Panc1 (cell line): ENCODE measurements at regions of chr6 and their contacts with region 1.

Region 1: GRCh38 chr6:89940225-89941027 is 46.2 kb downstream of the GJA10 start:
- DNase-seq: peak; percentile 67
- ATAC-seq: peak; percentile 95
- H3K4me3 ChIP-seq: no peak overlapping the region
- H3K27ac ChIP-seq: peak overlapping the region; percentile 73
- H3K4me1 ChIP-seq: peaks cover 2% of the 10 kb centered on the region; the same call in 1 of the 2 replicates
- H3K27me3 ChIP-seq: no peaks in the 10 kb centered on the region
- CTCF ChIP-seq: peak; percentile 80

Region 2: GRCh38 chr6:89952686-89953085 is 12.3 kb after region 1 on chr6:
- CTCF ChIA-PET with region 1: interaction called, 12 read pairs
- POLR2A ChIA-PET with region 1: no interaction called
- in situ Hi-C with region 1: no loop called
- intact Hi-C with region 1: no loop called
- DNase-seq: no peak
- ATAC-seq: peak; percentile 80
- H3K4me3 ChIP-seq: no peak overlapping the region
- H3K27ac ChIP-seq: peak overlapping the region; percentile 70
- H3K4me1 ChIP-seq: peaks cover 21% of the 10 kb centered on the region
- H3K27me3 ChIP-seq: no peaks in the 10 kb centered on the region
- CTCF ChIP-seq: no peak

Region 3: GRCh38 chr6:90219209-90219985 is 279.0 kb after region 1 on chr6:
- CTCF ChIA-PET with region 1: interaction called, 11 read pairs
- POLR2A ChIA-PET with region 1: no interaction called
- in situ Hi-C with region 1: no loop called
- intact Hi-C with region 1: no loop called
- DNase-seq: no peak
- ATAC-seq: peak; percentile 61
- H3K4me3 ChIP-seq: peak overlapping the region; percentile 1 to 34; a peak in 3 of 4 replicates
- H3K27ac ChIP-seq: peak overlapping the region; percentile 56
- H3K4me1 ChIP-seq: peaks cover 25% of the 10 kb centered on the region
- H3K27me3 ChIP-seq: no peaks in the 10 kb centered on the region
- CTCF ChIP-seq: no peak

Region 4: GRCh38 chr6:90393232-90393884 is 452.9 kb after region 1 on chr6:
- CTCF ChIA-PET with region 1: interaction called, 5 read pairs
- POLR2A ChIA-PET with region 1: no interaction called
- in situ Hi-C with region 1: no loop called
- intact Hi-C with region 1: loop called (anchors 10 kb)
- DNase-seq: no peak
- ATAC-seq: peak; percentile 78
- H3K4me3 ChIP-seq: no peak overlapping the region
- H3K27ac ChIP-seq: no peak overlapping the region
- H3K4me1 ChIP-seq: no peaks in the 10 kb centered on the region; the same call in 1 of the 2 replicates
- H3K27me3 ChIP-seq: no peaks in the 10 kb centered on the region
- CTCF ChIP-seq: peak; percentile 90